ENCODE measurements at regions of chr2 and their contacts with region 1.

Region 1: GRCh38 chr2:102355526-102356380 is at the start of gene IL18R1:
- DNase-seq: no peak
- H3K4me3 ChIP-seq: peak within 1 kb of the TSS; percentile 63 to 80
- H3K27ac ChIP-seq: peak within 1 kb of the TSS; percentile 68
- H3K4me1 ChIP-seq: no peaks in the 10 kb centered on the region
- H3K27me3 ChIP-seq: no peaks in the 10 kb centered on the region
- CTCF ChIP-seq: peak; percentile 43 to 78 (median 68)
- POLR2A ChIP-seq: peak in 1 of 2 donors; percentile 11
- total RNA-seq, gene IL18R1: 4.9 TPM

Region 2: GRCh38 chr2:101473911-101474701 is 881.6 kb before region 1 on chr2:
- intact Hi-C with region 1: no loop called
- DNase-seq: no peak
- H3K4me3 ChIP-seq: peak overlapping the region; percentile 53 to 69
- H3K27ac ChIP-seq: peak overlapping the region; percentile 93
- H3K4me1 ChIP-seq: peaks cover 20% of the 10 kb centered on the region
- H3K27me3 ChIP-seq: no peaks in the 10 kb centered on the region
- CTCF ChIP-seq: no peak
- POLR2A ChIP-seq: no peak

Region 3: DNA sequence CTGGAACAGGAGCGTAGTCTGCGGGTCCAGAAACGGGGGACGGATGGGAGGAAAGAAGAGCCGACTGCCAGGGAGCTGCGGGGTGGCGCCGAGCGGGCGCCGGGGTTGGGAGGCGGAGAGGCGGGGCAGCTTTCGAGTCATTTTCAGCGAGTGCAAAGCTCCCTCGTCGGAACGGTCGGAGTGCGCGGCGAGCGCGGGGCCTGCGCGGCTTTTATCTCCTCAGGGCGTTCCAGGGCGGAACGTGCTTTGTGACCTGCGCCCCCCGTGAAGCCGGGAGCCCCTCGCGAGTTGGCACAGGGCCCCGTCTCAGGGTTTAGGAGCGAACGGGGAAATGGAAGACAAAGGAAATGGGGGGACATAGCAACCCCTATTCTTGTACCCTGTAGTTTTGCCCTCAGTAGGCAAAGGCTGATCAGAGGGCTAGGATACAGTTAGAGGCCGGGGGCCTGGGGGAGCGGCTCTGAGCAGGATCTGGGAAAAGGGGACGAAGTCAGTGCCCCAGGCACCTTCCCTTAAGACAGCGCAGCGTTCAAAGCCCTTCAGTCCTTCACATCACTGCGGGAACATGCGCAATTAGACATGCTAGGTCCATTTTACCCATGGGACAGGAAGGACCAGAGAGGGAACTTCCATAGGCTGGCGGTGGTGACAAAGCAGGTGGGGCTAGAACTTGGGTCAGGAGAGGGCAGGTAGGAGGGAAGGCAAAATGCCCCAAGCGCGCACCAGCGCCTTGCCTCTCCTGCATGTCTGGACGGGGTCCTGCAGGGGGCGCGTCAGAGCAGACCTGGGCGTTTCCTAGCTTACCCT is 104.5 kb before region 1 on chr2:
- intact Hi-C with region 1: loop called (anchors 5 kb)
- DNase-seq: no peak
- H3K4me3 ChIP-seq: peak overlapping the region; percentile 41 to 42
- H3K27ac ChIP-seq: peak overlapping the region; percentile 22
- H3K4me1 ChIP-seq: peaks cover 9% of the 10 kb centered on the region
- H3K27me3 ChIP-seq: no peaks in the 10 kb centered on the region
- CTCF ChIP-seq: peak in 2 of 3 experiments; percentile 12 to 51
- POLR2A ChIP-seq: no peak

Region 4: DNA sequence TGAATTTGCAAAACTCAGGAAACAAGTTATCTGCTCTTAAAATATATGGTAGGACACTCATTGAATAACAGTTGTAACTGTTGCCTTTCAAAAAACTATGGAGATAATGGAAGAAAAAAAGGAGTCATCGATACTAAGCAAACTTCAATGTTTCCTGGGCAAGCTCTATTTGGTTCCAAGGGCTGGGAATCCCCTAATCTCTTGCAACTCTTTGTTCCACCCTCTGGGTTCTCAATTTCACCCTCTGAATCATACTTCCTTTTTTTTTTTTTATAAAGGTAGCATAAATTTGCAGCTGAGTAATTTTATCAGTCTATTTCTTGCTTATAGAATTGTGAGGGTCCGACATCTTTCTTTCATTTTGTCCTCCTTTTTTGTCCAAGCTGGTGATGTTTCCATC is 154.0 kb after region 1 on chr2:
- intact Hi-C with region 1: no loop called
- DNase-seq: no peak
- H3K4me3 ChIP-seq: no peak overlapping the region
- H3K27ac ChIP-seq: no peak overlapping the region
- H3K4me1 ChIP-seq: peaks cover 11% of the 10 kb centered on the region
- H3K27me3 ChIP-seq: no peaks in the 10 kb centered on the region
- CTCF ChIP-seq: no peak
- POLR2A ChIP-seq: no peak

Measured in vagina (tissue), 2 donors.